ENCODE measurements at regions of chr11 and their contacts with region 1.

Region 1: GRCh38 chr11:27698872-27699474 is 1.3 kb downstream of the BDNF start:
- DNase-seq: peak; percentile 92
- ATAC-seq: peak; percentile 53
- H3K4me3 ChIP-seq: peak overlapping the region; percentile 85
- H3K27ac ChIP-seq: peak overlapping the region; percentile 92
- H3K4me1 ChIP-seq: peaks cover 6% of the 10 kb centered on the region; the same call in 1 of the 2 replicates
- H3K27me3 ChIP-seq: no peaks in the 10 kb centered on the region
- CTCF ChIP-seq: peak; percentile 84
- POLR2A ChIP-seq: peak; percentile 82
- RAD21 ChIP-seq: peak; percentile 85

Region 2: GRCh38 chr11:27720277-27720830 is 21.4 kb after region 1 on chr11:
- CTCF ChIA-PET with region 1: interaction called, 8 read pairs
- POLR2A ChIA-PET with region 1: interaction called, 7 read pairs
- dilution Hi-C with region 1: no loop called
- in situ Hi-C with region 1: no loop called
- intact Hi-C with region 1: loop called (anchors 1 kb)
- DNase-seq: peak; percentile 68
- ATAC-seq: no peak
- H3K4me3 ChIP-seq: peak overlapping the region; percentile 0; the same call in 1 of the 2 replicates
- H3K27ac ChIP-seq: no peak overlapping the region
- H3K4me1 ChIP-seq: peaks cover 6% of the 10 kb centered on the region
- H3K27me3 ChIP-seq: no peaks in the 10 kb centered on the region
- CTCF ChIP-seq: 0 out of 2 replicates have a peak, but pooled peaks have one; percentile 18
- POLR2A ChIP-seq: no peak
- RAD21 ChIP-seq: no peak

Region 3: GRCh38 chr11:27735281-27735680 is 36.3 kb after region 1 on chr11:
- CTCF ChIA-PET with region 1: no interaction called
- POLR2A ChIA-PET with region 1: no interaction called
- dilution Hi-C with region 1: no loop called
- in situ Hi-C with region 1: no loop called
- intact Hi-C with region 1: no loop called
- DNase-seq: no peak
- ATAC-seq: no peak
- H3K4me3 ChIP-seq: no peak overlapping the region
- H3K27ac ChIP-seq: no peak overlapping the region
- H3K4me1 ChIP-seq: no peaks in the 10 kb centered on the region
- H3K27me3 ChIP-seq: no peaks in the 10 kb centered on the region
- CTCF ChIP-seq: no peak
- POLR2A ChIP-seq: no peak
- RAD21 ChIP-seq: no peak

Region 4: DNA sequence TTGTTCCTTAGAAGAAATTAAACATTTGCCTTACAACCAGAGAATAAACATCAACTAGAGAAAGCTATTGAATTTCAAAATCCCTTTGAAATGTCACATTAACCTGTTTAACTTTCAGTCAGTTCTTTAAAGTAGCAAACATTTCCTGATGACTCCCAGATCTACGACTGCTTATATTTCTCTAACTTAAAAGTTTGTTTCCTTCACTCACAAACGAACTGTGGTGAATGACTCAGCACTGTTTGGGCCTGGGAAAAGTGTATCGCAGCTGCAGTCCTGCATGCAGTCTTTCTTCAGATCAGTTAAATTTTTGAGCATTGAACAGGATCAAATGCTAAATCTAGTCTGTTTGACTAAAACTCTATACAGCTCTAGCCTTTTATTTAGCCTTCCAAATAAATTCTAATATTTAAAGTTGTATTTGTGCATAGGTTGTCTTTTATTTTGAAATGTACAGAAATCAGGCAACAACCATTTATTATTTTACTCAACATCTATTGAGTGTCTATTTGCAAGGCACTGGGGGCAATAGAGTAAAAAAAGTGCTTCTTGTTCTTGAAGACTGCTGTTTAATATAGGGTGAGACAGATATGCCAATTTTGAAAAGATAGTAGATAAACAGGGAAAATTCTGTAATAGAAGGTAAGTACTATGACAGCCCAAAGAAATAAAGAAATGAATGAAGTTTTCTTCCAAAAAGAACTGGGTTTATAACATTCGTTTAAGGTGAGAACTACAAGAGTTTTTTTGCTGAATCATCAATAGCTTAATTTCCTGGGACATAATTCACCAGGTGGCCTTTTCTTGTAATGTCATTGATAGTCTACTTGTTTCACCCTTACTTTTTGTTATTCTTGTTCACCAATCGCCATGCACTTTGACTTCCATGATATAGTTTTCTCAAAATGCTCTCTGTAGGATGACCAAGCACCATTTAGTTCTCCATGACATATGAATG is 644.6 kb after region 1 on chr11:
- CTCF ChIA-PET with region 1: no interaction called
- POLR2A ChIA-PET with region 1: no interaction called
- dilution Hi-C with region 1: no loop called
- in situ Hi-C with region 1: no loop called
- intact Hi-C with region 1: loop called (anchors 5 kb)
- DNase-seq: peak; percentile 95
- ATAC-seq: peak; percentile 90
- H3K4me3 ChIP-seq: no peak overlapping the region
- H3K27ac ChIP-seq: peak overlapping the region; percentile 9; the same call in 1 of the 2 replicates
- H3K4me1 ChIP-seq: no peaks in the 10 kb centered on the region
- H3K27me3 ChIP-seq: no peaks in the 10 kb centered on the region
- CTCF ChIP-seq: no peak
- POLR2A ChIP-seq: no peak
- RAD21 ChIP-seq: no peak

Region 5: DNA sequence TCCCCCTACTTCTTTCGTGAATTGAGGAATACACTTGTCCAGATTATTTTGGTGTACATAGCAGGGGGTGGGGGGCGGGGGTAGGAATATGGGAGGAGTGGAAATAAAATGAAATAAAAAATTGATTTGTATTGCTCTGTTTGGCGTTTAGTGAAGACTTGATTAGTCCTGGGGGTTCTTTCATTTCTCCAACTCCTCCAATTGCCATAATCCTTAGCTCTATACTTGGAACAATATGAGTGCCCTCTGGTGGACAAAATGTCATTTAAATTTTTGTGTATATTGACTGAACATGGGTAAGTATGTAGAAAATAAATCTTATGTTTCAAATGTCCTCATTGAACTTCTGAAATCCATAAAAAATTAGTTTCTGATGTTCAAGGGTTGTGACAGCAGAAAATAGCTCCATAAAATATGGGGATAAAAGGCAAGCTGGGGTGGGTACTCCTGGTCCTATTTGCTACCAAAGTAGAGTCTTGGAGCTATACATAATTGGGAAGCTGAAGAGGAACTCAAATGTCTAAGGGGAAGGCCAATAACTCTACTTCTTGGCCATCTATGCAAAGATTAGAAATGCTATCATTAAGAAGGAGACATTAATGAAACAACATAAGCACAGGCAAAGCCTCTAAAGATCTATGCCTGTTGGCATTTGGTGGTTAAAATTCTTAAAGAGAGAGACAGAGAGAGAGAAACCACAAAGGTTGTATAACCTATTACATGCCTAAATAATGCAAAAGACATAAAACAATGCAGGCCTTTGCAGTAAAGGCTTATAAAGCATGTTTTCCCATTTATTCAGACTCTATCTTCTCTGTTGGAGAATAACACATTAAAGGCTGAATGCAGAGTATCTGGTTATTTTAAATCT is 830.8 kb after region 1 on chr11:
- CTCF ChIA-PET with region 1: interaction called, 4 read pairs
- POLR2A ChIA-PET with region 1: no interaction called
- dilution Hi-C with region 1: no loop called
- in situ Hi-C with region 1: loop called (anchors 25 kb)
- intact Hi-C with region 1: loop called (anchors 2 kb)
- DNase-seq: peak; percentile 82
- ATAC-seq: peak; percentile 64
- H3K4me3 ChIP-seq: no peak overlapping the region
- H3K27ac ChIP-seq: peak overlapping the region; percentile 19; the same call in 1 of the 2 replicates
- H3K4me1 ChIP-seq: peaks cover 3% of the 10 kb centered on the region; the same call in 1 of the 2 replicates
- H3K27me3 ChIP-seq: no peaks in the 10 kb centered on the region
- CTCF ChIP-seq: peak; percentile 57
- POLR2A ChIP-seq: no peak
- RAD21 ChIP-seq: peak; percentile 59

Region 6: DNA sequence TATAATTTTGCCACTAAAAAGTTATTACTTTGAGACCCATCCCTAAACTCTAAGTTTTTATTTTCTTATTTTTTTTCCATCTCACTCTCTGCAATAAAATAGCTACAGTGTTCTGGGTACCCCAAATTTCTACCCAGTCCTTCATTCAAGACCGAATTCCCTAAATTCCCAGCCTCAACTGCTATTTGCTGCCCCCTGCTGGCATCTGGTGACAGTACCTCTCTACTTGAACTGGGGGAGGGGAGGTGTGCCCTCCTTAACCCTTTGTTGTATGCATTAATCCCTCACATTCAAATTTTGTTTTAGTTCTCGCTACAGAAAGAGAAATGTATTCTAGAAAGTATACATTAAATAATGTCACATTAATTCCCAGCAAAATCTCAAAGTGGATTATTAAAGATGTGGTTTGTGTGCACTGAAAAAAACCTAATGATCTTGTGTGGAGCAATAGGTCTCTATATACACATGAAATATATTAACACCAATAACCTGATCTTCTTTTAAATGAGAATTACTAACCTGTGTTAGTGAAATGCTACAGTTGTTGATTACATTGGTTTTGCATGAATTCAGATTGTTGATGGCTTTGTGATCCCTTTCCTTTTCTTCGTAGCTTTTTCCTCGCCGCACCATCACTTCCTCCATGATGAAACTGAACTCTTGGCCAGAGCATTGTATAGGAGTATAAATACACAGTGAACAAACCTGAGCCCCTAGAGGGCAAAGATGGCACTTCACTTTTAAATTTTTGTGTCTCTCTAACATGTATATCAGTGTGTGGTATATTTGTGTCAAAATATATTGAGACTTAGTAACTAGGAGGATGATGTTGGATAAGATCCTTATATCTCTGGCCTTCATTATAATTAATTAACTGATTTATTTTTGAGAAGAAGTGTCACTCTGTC is 999.2 kb after region 1 on chr11:
- CTCF ChIA-PET with region 1: no interaction called
- POLR2A ChIA-PET with region 1: interaction called, 3 read pairs
- dilution Hi-C with region 1: no loop called
- in situ Hi-C with region 1: loop called (anchors 10 kb)
- intact Hi-C with region 1: loop called (anchors 2 kb)
- DNase-seq: peak; percentile 61
- ATAC-seq: peak; percentile 64
- H3K4me3 ChIP-seq: no peak overlapping the region
- H3K27ac ChIP-seq: peak overlapping the region; percentile 11; the same call in 1 of the 2 replicates
- H3K4me1 ChIP-seq: peaks cover 14% of the 10 kb centered on the region
- H3K27me3 ChIP-seq: no peaks in the 10 kb centered on the region
- CTCF ChIP-seq: peak; percentile 78
- POLR2A ChIP-seq: no peak
- RAD21 ChIP-seq: peak; percentile 81

Region 7: GRCh38 chr11:29159552-29160465 is 1460.8 kb after region 1 on chr11:
- CTCF ChIA-PET with region 1: interaction called, 5 read pairs
- POLR2A ChIA-PET with region 1: interaction called, 3 read pairs
- dilution Hi-C with region 1: no loop called
- in situ Hi-C with region 1: loop called (anchors 25 kb)
- intact Hi-C with region 1: loop called (anchors 1 kb)
- DNase-seq: peak; percentile 90
- ATAC-seq: peak; percentile 98
- H3K4me3 ChIP-seq: no peak overlapping the region
- H3K27ac ChIP-seq: peak overlapping the region; percentile 89
- H3K4me1 ChIP-seq: peaks cover 9% of the 10 kb centered on the region
- H3K27me3 ChIP-seq: no peaks in the 10 kb centered on the region
- CTCF ChIP-seq: peak; percentile 85
- POLR2A ChIP-seq: peak; percentile 17; the same call in 1 of the 2 replicates
- RAD21 ChIP-seq: peak; percentile 94

Measured in IMR-90 (cell line).